ENCODE measurements at regions of chr7 and their contacts with region 1.

Region 1: GRCh38 chr7:76314042-76314721 is 11.7 kb downstream of the HSPB1 start:
- DNase-seq: peak; percentile 85
- ATAC-seq: peak; percentile 58
- H3K4me3 ChIP-seq: no peak overlapping the region; a peak in 1 of 6 replicates
- H3K27ac ChIP-seq: no peak overlapping the region
- H3K4me1 ChIP-seq: peaks cover 42% of the 10 kb centered on the region
- H3K27me3 ChIP-seq: no peaks in the 10 kb centered on the region; a peak in 1 of 5 replicates
- CTCF ChIP-seq: peak; percentile 100
- EP300 ChIP-seq: no peak
- POLR2A ChIP-seq: no peak
- RAD21 ChIP-seq: peak; percentile 100

Region 2: GRCh38 chr7:75994388-75995051 is 319.7 kb before region 1 on chr7 and contains the start of gene TMEM120A:
- CTCF ChIA-PET with region 1: no interaction called
- POLR2A ChIA-PET with region 1: no interaction called
- in situ Hi-C with region 1: no loop called
- intact Hi-C with region 1: no loop called
- DNase-seq: peak; percentile 88
- ATAC-seq: peak; percentile 86
- H3K4me3 ChIP-seq: peak within 1 kb of the TSS; percentile 88 to 98 (median 91)
- H3K27ac ChIP-seq: peak within 1 kb of the TSS; percentile 97
- H3K4me1 ChIP-seq: peaks cover 34% of the 10 kb centered on the region
- H3K27me3 ChIP-seq: no peaks in the 10 kb centered on the region
- CTCF ChIP-seq: peak; percentile 25; the same call in 1 of the 2 replicates
- EP300 ChIP-seq: 0 out of 4 replicates have a peak, but pooled peaks of 1 of the 2 experiments have one; percentile 20
- POLR2A ChIP-seq: peak in 1 of 2 experiments; percentile 96; a peak in 2 of 4 replicates
- RAD21 ChIP-seq: peak; percentile 26; the same call in 1 of the 2 replicates
- total RNA-seq, gene TMEM120A: 22.9 and 40.3 TPM in 2 replicates

Region 3: GRCh38 chr7:76173364-76174205 is 140.6 kb before region 1 on chr7:
- CTCF ChIA-PET with region 1: interaction called, 57 read pairs
- POLR2A ChIA-PET with region 1: interaction called, 6 read pairs
- in situ Hi-C with region 1: loop called (anchors 5 kb)
- intact Hi-C with region 1: loop called (anchors 1 kb)
- DNase-seq: no peak
- ATAC-seq: no peak
- H3K4me3 ChIP-seq: no peak overlapping the region
- H3K27ac ChIP-seq: no peak overlapping the region
- H3K4me1 ChIP-seq: peaks cover 9% of the 10 kb centered on the region
- H3K27me3 ChIP-seq: peaks cover 2 to 12% of the 10 kb centered on the region in 2 experiments; a peak in 2 of 5 replicates
- CTCF ChIP-seq: no peak
- EP300 ChIP-seq: no peak
- POLR2A ChIP-seq: no peak
- RAD21 ChIP-seq: no peak

Region 4: GRCh38 chr7:76220185-76221057 is 93.8 kb before region 1 on chr7:
- CTCF ChIA-PET with region 1: interaction called, 17 read pairs
- POLR2A ChIA-PET with region 1: no interaction called
- in situ Hi-C with region 1: no loop called
- intact Hi-C with region 1: no loop called
- DNase-seq: peak; percentile 49
- ATAC-seq: peak; percentile 89
- H3K4me3 ChIP-seq: peak overlapping the region in 1 of 3 experiments; percentile 24; a peak in 1 of 6 replicates
- H3K27ac ChIP-seq: no peak overlapping the region
- H3K4me1 ChIP-seq: peaks cover 10% of the 10 kb centered on the region; the same call in 1 of the 2 replicates
- H3K27me3 ChIP-seq: peaks cover 0 to 17% of the 10 kb centered on the region in 2 experiments; a peak in 2 of 5 replicates
- CTCF ChIP-seq: peak; percentile 95
- EP300 ChIP-seq: no peak
- POLR2A ChIP-seq: no peak
- RAD21 ChIP-seq: peak; percentile 94

Region 5: DNA sequence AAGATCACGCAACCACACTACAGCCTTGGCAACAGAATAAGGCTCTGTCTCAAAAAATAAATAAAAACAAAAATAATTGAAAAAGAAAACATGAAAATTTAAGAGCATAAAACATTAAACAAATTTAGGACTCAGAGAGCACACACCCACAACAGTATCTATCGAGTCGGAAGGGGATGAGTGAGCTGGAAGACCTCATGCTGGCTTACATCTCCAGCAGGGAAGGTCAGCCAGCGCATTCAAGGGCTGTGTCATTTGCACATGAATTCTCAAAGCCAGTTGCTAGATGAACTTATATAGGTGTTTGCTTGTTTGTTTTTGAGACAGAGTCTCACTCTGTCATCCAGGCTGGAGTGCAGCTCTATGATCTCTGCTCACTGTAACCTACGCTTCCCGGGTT is 62.2 kb before region 1 on chr7:
- CTCF ChIA-PET with region 1: no interaction called
- POLR2A ChIA-PET with region 1: no interaction called
- in situ Hi-C with region 1: no loop called
- intact Hi-C with region 1: no loop called
- DNase-seq: no peak
- ATAC-seq: no peak
- H3K4me3 ChIP-seq: no peak overlapping the region
- H3K27ac ChIP-seq: peak overlapping the region; percentile 92
- H3K4me1 ChIP-seq: peaks cover 55% of the 10 kb centered on the region
- H3K27me3 ChIP-seq: no peaks in the 10 kb centered on the region
- CTCF ChIP-seq: no peak
- EP300 ChIP-seq: no peak
- POLR2A ChIP-seq: no peak
- RAD21 ChIP-seq: no peak

Region 6: GRCh38 chr7:76282344-76283253 is 31.6 kb before region 1 on chr7:
- CTCF ChIA-PET with region 1: interaction called, 6 read pairs
- POLR2A ChIA-PET with region 1: no interaction called
- in situ Hi-C with region 1: loop called (anchors 5 kb)
- intact Hi-C with region 1: no loop called
- DNase-seq: no peak
- ATAC-seq: no peak
- H3K4me3 ChIP-seq: no peak overlapping the region
- H3K27ac ChIP-seq: no peak overlapping the region
- H3K4me1 ChIP-seq: peaks cover 28% of the 10 kb centered on the region
- H3K27me3 ChIP-seq: peaks cover 10 to 64% of the 10 kb centered on the region in 2 experiments
- CTCF ChIP-seq: no peak
- EP300 ChIP-seq: no peak
- POLR2A ChIP-seq: no peak
- RAD21 ChIP-seq: no peak

Region 7: DNA sequence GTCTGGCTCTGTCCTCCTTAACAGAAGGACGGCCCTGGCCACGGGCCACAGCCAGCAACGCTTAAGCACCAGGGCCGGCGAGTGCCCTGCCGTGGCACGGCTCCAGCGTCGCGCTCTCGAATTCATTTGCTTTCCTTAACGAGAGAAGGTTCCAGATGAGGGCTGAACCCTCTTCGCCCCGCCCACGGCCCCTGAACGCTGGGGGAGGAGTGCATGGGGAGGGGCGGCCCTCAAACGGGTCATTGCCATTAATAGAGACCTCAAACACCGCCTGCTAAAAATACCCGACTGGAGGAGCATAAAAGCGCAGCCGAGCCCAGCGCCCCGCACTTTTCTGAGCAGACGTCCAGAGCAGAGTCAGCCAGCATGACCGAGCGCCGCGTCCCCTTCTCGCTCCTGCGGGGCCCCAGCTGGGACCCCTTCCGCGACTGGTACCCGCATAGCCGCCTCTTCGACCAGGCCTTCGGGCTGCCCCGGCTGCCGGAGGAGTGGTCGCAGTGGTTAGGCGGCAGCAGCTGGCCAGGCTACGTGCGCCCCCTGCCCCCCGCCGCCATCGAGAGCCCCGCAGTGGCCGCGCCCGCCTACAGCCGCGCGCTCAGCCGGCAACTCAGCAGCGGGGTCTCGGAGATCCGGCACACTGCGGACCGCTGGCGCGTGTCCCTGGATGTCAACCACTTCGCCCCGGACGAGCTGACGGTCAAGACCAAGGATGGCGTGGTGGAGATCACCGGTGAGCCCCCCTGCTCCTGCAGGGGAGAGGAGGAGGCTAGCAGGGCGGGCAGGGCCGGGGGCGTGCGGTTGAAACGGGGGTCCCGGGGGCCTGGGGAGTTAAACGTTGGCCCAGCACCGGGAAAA is 11.6 kb before region 1 on chr7 and contains the start of gene HSPB1:
- CTCF ChIA-PET with region 1: interaction called, 179 read pairs
- POLR2A ChIA-PET with region 1: interaction called, 13 read pairs
- in situ Hi-C with region 1: no loop called
- intact Hi-C with region 1: no loop called
- DNase-seq: peak; percentile 65
- ATAC-seq: peak; percentile 57
- H3K4me3 ChIP-seq: peak within 1 kb of the TSS; percentile 62 to 81 (median 64)
- H3K27ac ChIP-seq: peak within 1 kb of the TSS; percentile 27
- H3K4me1 ChIP-seq: peaks cover 68% of the 10 kb centered on the region
- H3K27me3 ChIP-seq: no peaks in the 10 kb centered on the region
- CTCF ChIP-seq: no peak; the same call in 1 of the 2 replicates
- EP300 ChIP-seq: no peak
- POLR2A ChIP-seq: peak in 1 of 2 experiments; percentile 67; a peak in 2 of 4 replicates
- RAD21 ChIP-seq: no peak
- total RNA-seq, gene HSPB1: 21.0 and 22.7 TPM in 2 replicates

Region 8: GRCh38 chr7:76383089-76383944 is 69.1 kb after region 1 on chr7:
- CTCF ChIA-PET with region 1: no interaction called
- POLR2A ChIA-PET with region 1: no interaction called
- in situ Hi-C with region 1: no loop called
- intact Hi-C with region 1: loop called (anchors 1 kb)
- DNase-seq: peak; percentile 64
- ATAC-seq: peak; percentile 30
- H3K4me3 ChIP-seq: 0 out of 6 replicates have a peak overlapping the region, but pooled peaks of 1 of the 3 experiments have one; percentile 16
- H3K27ac ChIP-seq: no peak overlapping the region
- H3K4me1 ChIP-seq: peaks cover 46% of the 10 kb centered on the region
- H3K27me3 ChIP-seq: no peaks in the 10 kb centered on the region
- CTCF ChIP-seq: peak; percentile 48
- EP300 ChIP-seq: no peak
- POLR2A ChIP-seq: no peak
- RAD21 ChIP-seq: no peak

Measured in HepG2 (cell line).